Mucosa of descending colon (tissue), 3 donors: ENCODE measurements at regions of chr12 and their contacts with region 1.

Region 1: GRCh38 chr12:111444925-111445725 is 39.4 kb downstream of the SH2B3 start:
- DNase-seq: peak; percentile 66 to 86 (median 68)
- ATAC-seq: peak; percentile 57
- H3K4me3 ChIP-seq: no peak overlapping the region
- H3K4me1 ChIP-seq: peaks cover 54% of the 10 kb centered on the region
- CTCF ChIP-seq: no peak

Region 2: GRCh38 chr12:111353603-111354295 is 91.4 kb before region 1 on chr12:
- intact Hi-C with region 1: no loop called
- DNase-seq: no peak
- ATAC-seq: no peak
- H3K4me3 ChIP-seq: no peak overlapping the region
- H3K4me1 ChIP-seq: no peaks in the 10 kb centered on the region
- CTCF ChIP-seq: no peak

Region 3: DNA sequence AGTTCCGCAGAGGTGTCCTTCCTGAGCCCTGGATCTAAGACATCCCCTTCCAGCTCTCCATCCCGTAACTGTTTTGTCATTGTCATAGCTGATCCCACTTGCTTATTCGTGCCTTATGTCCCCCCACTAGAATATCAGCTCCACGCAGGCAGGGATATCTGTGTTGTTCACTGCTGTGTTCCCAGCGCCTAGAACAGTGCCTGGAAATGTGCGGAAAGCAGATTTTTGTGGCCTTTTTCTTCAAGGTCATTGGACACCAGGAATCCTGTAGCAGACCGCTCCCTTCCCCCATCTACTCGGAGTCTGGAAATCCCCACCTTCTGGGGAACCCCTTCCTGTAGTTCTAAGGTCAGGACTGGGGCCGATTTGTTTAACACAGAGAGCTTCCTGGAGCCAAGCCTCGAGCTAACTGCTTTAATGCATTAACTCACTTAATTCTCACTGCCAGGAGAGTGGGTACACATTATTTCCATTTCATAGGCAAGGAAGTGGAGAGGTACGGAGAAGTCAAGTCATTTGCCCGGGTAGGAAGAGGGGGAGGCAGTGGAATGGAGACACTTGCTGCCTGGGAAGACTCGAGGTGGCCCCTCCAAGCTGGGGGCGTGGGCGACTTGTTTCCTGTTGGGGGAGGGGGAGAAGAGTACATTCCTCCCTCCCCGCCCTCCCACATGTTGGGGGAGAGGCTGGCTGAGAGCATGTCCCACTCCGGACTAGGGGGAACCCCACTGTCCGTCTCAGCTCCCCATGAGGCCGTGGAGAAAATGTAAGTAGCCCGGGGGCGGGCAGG is 40.6 kb before region 1 on chr12:
- intact Hi-C with region 1: loop called in 1 of 2 experiments (anchors 5 kb)
- DNase-seq: peak in 1 of 3 donors; percentile 55
- ATAC-seq: no peak
- H3K4me3 ChIP-seq: no peak overlapping the region
- H3K4me1 ChIP-seq: peaks cover 23% of the 10 kb centered on the region
- CTCF ChIP-seq: no peak

Region 4: DNA sequence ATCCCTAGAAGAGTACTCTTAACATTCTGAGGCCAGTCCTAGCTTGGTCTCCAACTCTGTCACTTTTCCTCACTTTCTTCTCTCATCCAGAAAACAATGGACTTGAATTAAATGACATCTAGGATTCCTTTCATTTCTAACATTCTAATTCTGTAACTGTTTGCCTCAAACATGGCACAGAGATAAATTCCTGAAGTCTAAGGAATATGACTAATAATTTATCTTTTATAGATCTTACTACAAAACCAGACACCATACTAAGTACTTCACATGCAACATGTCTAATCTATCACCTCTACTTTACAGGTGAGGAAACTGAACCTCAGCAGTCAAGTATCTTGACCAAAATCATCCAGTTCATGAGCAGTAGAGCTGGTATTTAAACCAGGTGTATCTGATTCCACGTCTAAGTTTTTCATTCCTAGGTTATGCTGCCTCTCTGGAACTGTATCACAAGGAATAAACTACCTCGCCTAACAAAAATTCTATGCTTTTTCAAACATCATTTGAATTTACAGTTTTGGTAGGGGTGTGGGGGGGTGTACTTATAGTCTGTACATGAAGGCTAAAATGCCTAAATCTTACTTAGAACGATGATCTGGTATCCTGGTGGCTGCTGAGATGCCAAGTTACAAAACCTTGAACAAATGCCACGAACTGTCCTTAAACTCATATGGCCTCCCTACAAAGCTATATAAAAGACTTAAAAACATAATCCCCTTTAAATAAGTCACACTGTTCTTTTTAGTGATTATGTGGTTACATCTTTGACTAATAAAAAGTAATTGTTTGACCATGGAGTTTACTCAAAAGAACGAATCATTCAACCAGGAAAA is 112.4 kb after region 1 on chr12:
- intact Hi-C with region 1: no loop called
- DNase-seq: no peak
- ATAC-seq: no peak
- H3K4me3 ChIP-seq: no peak overlapping the region
- H3K4me1 ChIP-seq: no peaks in the 10 kb centered on the region
- CTCF ChIP-seq: no peak